HEK293 (cell line): ENCODE measurements at regions of chr1 and their contacts with region 1.

Region 1: GRCh38 chr1:241627453-241628259 is 12.5 kb downstream of the CHML start:
- H3K4me3 ChIP-seq: no peak overlapping the region
- H3K27ac ChIP-seq: no peak overlapping the region
- H3K4me1 ChIP-seq: peaks cover 15% of the 10 kb centered on the region
- CTCF ChIP-seq: peak; percentile 62

Region 2: GRCh38 chr1:241615043-241615974 is 12.3 kb before region 1 on chr1:
- CTCF ChIA-PET with region 1: interaction called, 14 read pairs
- POLR2A ChIA-PET with region 1: no interaction called
- H3K4me3 ChIP-seq: no peak overlapping the region
- H3K27ac ChIP-seq: no peak overlapping the region
- H3K4me1 ChIP-seq: no peaks in the 10 kb centered on the region
- CTCF ChIP-seq: no peak

Region 3: GRCh38 chr1:241640029-241640818 is 12.6 kb after region 1 on chr1 and contains the starts of genes CHML and OPN3:
- CTCF ChIA-PET with region 1: interaction called, 23 read pairs
- POLR2A ChIA-PET with region 1: interaction called, 11 read pairs
- H3K4me3 ChIP-seq: peak within 1 kb of the TSS; percentile 95
- H3K27ac ChIP-seq: peak within 1 kb of the TSS; percentile 89
- H3K4me1 ChIP-seq: peaks cover 10% of the 10 kb centered on the region
- CTCF ChIP-seq: no peak

Region 4: GRCh38 chr1:241834733-241835377 is 207.2 kb after region 1 on chr1:
- CTCF ChIA-PET with region 1: interaction called, 41 read pairs
- POLR2A ChIA-PET with region 1: no interaction called
- H3K4me3 ChIP-seq: no peak overlapping the region
- H3K27ac ChIP-seq: no peak overlapping the region
- H3K4me1 ChIP-seq: no peaks in the 10 kb centered on the region
- CTCF ChIP-seq: peak; percentile 44; the same call in 1 of the 2 replicates